CD4-positive, alpha-beta memory T cell (primary cell): ENCODE measurements at regions of chr19 and their contacts with region 1.

Region 1: DNA sequence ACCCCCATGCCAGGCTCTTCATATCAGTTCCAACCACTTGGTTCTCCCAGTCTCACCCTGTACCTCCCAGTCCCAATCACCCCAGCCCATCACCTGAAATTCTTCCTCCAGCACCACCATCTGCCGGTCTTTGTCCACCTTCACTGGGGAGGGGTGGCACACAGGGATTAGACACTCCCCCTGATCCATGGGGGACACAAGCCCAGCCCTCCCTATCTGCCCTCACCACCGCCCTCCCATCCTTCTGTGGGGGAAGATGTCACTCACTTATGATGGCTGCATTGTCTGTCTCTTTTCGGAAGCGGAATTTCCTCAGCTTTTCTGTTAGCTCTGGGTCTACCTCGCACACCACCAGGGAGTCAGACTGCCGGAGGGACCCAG is 685 bp downstream of the GMFG start:
- DNase-seq: peak in 3 of 5 donors; percentile 30 to 59 (median 39)
- H3K4me3 ChIP-seq: peak overlapping the region; percentile 67 to 99
- H3K4me3 Mint-ChIP-seq: peak overlapping the region; percentile 97 to 100 (median 98)
- H3K27ac ChIP-seq: peak overlapping the region; percentile 88
- H3K27ac Mint-ChIP-seq: peak overlapping the region; percentile 96 to 100 (median 99)
- H3K4me1 ChIP-seq: peaks cover 74% of the 10 kb centered on the region
- H3K4me1 Mint-ChIP-seq: peaks cover 31 to 74% (median 54%) of the 10 kb centered on the region in 4 donors
- H3K27me3 ChIP-seq: no peaks in the 10 kb centered on the region
- H3K27me3 Mint-ChIP-seq: no peaks in the 10 kb centered on the region

Region 2: DNA sequence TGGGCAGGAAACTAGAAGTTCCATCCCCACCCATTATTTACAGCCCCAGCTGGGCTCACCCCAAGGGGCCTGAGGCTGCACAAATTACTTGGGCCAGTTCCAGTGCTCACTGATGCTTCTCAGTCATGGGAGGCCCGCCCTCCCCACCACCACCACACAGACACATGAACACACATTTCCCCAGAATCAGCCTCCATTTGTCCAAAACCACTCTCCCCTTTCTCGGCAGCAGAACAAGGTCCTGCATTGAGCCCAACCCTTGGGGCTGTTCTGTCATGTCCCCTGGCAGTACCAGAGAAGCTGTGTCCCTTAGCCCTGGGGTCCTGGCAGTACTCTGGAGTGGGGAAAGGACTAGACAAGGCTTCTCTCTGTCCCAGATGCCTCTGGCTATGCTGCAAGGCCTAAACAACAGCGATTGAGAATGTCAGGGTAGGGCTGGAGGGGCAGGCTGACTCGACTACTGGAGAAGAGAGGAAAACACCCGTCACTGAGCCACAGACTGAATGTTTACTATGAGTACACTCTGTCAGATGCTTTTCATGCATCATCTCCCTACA is 28.8 kb after region 1 on chr19:
- CTCF ChIA-PET with region 1: no interaction called
- POLR2A ChIA-PET with region 1: no interaction called
- intact Hi-C with region 1: no loop called
- DNase-seq: no peak
- H3K4me3 ChIP-seq: no peak overlapping the region
- H3K4me3 Mint-ChIP-seq: no peak overlapping the region
- H3K27ac ChIP-seq: no peak overlapping the region
- H3K27ac Mint-ChIP-seq: peak overlapping the region in 3 of 7 donors; percentile 29 to 84 (median 79)
- H3K4me1 ChIP-seq: no peaks in the 10 kb centered on the region
- H3K4me1 Mint-ChIP-seq: peaks cover 0 to 6% (median 0%) of the 10 kb centered on the region in 4 donors
- H3K27me3 ChIP-seq: no peaks in the 10 kb centered on the region
- H3K27me3 Mint-ChIP-seq: no peaks in the 10 kb centered on the region

Region 3: DNA sequence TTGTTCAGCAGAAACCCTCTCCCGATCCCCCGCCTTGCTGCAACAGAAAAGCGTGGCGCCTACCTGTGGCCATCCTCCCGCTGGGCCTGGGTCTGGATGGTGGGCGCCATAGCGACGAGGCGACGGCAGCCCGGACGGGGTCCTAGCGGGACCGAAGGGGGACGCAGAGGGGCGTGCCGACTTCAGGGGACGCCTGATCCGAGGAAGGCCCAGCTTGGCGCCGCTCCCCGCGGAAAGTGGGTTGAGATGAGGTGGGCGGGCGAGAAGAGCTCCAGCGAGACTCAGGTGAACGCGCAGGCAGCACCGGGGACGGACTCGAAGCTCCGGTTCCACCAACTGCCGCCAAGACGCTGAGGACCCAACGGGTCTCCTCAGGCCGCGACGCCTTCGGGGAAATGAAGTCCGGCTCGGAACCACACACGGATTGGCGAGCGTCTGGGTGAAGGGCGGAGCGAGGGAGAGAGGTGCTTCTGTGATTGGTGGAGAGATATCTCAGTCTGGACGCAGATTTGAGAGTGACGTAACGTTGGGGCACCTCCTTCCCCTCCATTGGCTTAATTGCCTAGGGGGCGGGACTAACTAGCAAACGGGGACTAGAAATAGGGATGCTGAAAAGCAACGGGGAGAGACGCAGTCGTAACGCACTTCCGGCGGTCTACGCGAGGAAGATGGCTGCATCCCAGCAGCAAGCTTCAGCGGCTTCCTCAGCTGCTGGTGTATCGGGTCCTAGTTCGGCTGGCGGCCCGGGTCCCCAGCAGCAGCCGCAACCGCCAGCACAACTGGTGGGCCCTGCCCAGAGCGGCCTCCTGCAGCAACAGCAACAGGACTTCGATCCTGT is 55.8 kb after region 1 on chr19 and contains the starts of genes MED29 and PAF1:
- CTCF ChIA-PET with region 1: no interaction called
- POLR2A ChIA-PET with region 1: interaction called, 15 read pairs
- intact Hi-C with region 1: no loop called
- DNase-seq: peak; percentile 96 to 99 (median 99)
- H3K4me3 ChIP-seq: peak within 1 kb of the TSS; percentile 71 to 93
- H3K4me3 Mint-ChIP-seq: peak within 1 kb of the TSS; percentile 90 to 99 (median 98)
- H3K27ac ChIP-seq: peak within 1 kb of the TSS; percentile 99
- H3K27ac Mint-ChIP-seq: peak within 1 kb of the TSS; percentile 93 to 100 (median 100)
- H3K4me1 ChIP-seq: peaks cover 26% of the 10 kb centered on the region
- H3K4me1 Mint-ChIP-seq: peaks cover 22 to 46% (median 33%) of the 10 kb centered on the region in 4 donors
- H3K27me3 ChIP-seq: no peaks in the 10 kb centered on the region
- H3K27me3 Mint-ChIP-seq: no peaks in the 10 kb centered on the region
- total RNA-seq, gene MED29: 43.1 to 51.3 TPM
- total RNA-seq, gene PAF1: 49.2 to 53.8 TPM

Region 4: GRCh38 chr19:39406656-39407393 is 71.7 kb after region 1 on chr19 and contains the start of gene ZFP36:
- CTCF ChIA-PET with region 1: interaction called, 5 read pairs
- POLR2A ChIA-PET with region 1: interaction called, 21 read pairs
- intact Hi-C with region 1: no loop called
- DNase-seq: peak; percentile 86 to 88 (median 87)
- H3K4me3 ChIP-seq: peak within 1 kb of the TSS; percentile 97 to 100
- H3K4me3 Mint-ChIP-seq: peak within 1 kb of the TSS; percentile 88 to 99 (median 97)
- H3K27ac ChIP-seq: peak within 1 kb of the TSS; percentile 100
- H3K27ac Mint-ChIP-seq: peak within 1 kb of the TSS; percentile 99 to 100 (median 100)
- H3K4me1 ChIP-seq: peaks cover 66% of the 10 kb centered on the region
- H3K4me1 Mint-ChIP-seq: peaks cover 38 to 95% (median 55%) of the 10 kb centered on the region in 4 donors
- H3K27me3 ChIP-seq: no peaks in the 10 kb centered on the region
- H3K27me3 Mint-ChIP-seq: peaks cover 0 to 2% of the 10 kb centered on the region in 2 donors
- total RNA-seq, gene ZFP36: 151 to 152 TPM